OCI-LY7 (cell line): ENCODE measurements at regions of chr22 and their contacts with region 1.

Region 1: DNA sequence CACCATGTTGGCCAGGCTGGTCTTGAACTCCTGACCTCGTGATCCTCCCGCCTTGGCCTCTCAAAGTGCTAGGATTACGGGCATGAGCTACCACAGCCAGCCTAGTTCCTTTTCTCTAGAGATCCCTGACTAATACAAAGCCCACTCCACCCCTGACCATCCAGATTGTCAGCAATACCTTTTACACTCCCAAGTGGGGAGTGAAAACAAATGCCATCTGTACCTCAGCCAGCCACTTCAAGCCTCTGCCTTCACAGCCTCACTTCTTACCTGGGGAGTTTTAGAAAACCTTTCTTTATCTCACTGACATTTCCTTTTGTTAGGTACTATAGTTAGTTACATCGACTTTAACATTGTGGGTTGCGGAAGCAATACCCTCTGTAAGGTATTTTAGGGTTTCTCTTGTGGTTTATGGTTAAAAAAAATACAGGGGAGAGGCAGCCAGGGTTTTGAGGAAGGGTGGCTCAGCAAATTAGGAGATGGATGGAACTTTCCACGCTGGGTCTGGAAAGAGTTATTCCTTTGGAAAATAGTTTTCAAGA is 8.9 kb downstream of the TOM1 start:
- DNase-seq: peak; percentile 36
- H3K4me3 ChIP-seq: no peak overlapping the region
- H3K27ac ChIP-seq: peak overlapping the region; percentile 14
- H3K4me1 ChIP-seq: peaks cover 55% of the 10 kb centered on the region
- CTCF ChIP-seq: no peak

Region 2: DNA sequence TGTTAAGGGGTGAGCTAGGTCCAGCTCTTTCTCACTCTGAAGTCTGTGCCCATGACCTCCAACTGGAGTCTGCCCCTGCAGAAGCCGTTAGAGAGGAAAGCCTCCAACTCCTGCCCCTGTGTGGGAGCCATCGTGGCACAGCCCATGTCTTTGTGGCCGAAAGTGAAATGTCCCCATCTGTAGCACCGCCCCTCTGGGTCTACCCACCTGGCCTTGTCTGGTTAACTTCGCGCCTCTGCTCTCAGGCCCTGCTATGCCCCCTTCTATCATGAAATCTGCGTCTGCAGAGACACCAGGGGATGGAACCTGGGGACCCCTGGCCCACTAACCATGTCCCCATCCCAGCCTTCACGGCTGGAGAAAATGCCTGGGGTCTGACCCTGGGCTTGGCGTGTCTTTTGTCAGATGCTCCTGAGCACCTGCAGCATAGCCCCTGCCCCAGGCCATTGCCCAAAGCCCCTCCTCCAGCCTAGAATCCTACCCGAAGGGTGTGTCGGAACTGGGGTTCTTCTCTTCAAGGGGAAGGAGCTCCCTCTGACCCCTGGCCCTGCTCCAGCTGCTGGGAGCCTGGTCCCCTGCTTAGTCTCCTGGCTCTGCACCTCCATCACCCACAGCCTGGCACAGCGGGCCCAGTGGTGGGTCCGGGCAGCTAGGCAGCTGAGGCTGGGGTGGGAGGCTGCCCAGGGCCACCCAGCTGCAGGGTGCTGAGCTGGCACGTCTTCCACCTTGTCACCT is 36.6 kb after region 1 on chr22:
- CTCF ChIA-PET with region 1: no interaction called
- POLR2A ChIA-PET with region 1: interaction called, 3 read pairs
- intact Hi-C with region 1: loop called (anchors 2 kb)
- DNase-seq: peak; percentile 69
- H3K4me3 ChIP-seq: no peak overlapping the region
- H3K27ac ChIP-seq: peak overlapping the region; percentile 60
- H3K4me1 ChIP-seq: peaks cover 54% of the 10 kb centered on the region
- CTCF ChIP-seq: no peak

Region 3: GRCh38 chr22:35409783-35410662 is 101.5 kb after region 1 on chr22:
- CTCF ChIA-PET with region 1: no interaction called
- POLR2A ChIA-PET with region 1: no interaction called
- intact Hi-C with region 1: loop called (anchors 5 kb)
- DNase-seq: peak; percentile 90
- H3K4me3 ChIP-seq: peak overlapping the region; percentile 50
- H3K27ac ChIP-seq: peak overlapping the region; percentile 90
- H3K4me1 ChIP-seq: peaks cover 80% of the 10 kb centered on the region
- CTCF ChIP-seq: no peak